Head of caudate nucleus (tissue), 42 donors: ENCODE measurements at regions of chr4 and their contacts with region 1.

Region 1: DNA sequence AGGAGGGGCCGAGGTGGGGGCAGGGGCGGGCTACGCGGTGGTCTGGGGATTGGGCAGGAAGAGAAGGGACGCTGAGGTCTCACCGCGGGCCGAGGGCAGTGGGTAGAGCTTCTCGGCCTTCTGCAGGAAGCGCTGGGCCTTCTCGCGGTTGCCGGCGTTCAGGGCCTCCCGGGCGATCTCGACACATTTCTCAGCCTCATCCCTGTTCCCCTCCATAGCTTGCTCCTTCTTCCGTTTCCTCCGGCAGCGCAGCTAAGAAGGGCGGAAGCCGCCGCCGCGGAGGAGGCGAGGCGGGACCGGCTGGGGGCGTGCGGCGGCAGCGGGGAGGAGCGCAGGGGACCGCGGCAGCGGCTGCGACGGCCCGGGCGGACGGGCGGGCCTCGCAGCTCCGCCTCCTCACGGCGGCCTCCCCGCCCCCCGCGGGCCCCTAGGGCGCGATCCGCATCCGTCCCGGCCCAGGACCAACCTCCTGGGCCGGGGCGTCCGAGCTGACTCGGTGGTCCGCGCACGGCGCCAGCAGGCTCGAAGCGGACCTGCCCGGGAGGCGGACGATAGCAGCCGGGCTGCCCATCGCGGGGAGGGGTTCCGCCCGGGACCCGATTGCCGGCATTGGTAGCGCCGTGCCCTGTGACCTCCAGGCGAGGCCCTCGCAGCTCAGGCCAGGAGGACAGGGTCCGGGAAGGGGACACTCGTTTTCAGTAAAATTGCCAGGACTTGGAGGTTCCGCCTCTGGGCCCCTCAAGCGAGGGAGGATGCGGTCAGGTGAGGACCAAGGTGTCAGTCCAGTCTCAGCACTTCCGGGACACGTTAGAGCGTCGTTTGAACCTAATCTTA is at the start of gene DNAJB14:
- DNase-seq: peak in 40 of 42 donors; percentile 43 to 90 (median 78)

Region 2: DNA sequence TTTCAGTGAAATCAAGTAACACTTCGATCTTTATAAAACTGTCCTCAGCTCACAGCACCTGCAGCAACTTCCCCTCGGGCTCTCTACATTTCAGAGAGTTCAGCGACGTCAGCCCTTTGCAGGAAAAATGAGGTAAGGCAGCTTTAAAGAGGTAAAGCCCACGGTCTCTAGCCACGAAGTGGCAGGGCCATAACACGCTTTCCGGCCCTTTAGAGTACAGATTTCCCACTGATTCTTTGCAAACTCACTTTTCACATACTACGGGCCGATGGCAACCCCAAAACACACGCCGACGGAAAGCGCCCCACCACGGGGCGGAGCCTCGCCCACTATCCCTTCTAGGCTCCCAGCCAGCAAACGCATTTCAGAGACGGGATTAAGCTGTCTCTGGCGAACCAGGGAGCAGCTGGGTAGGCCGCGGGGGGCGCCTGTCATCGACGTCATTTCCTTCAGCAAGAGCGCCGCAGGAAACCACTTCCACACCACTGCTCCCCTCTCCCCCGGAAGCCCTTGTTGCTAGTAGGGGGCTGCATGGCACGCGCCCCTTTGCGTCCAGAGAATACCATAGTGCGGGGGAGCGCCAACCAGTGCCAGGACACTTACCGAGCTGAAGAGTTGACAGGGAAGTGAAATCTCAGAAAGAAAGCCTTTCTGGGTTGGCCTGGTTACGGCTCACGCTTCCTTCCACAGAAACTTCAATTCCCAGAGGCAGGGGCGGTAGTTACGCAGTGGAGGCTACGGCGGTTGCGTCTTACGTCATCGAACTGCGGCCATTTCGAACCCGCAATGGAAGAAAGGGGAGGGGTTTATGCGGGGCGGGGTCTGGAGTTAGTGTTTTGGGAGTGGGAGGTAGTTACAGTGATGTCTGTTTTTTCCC is 383.0 kb before region 1 on chr4 and contains the start of gene TRMT10A:
- intact Hi-C with region 1: loop called (anchors 2 kb)
- DNase-seq: peak; percentile 95 to 99 (median 98)

Region 3: DNA sequence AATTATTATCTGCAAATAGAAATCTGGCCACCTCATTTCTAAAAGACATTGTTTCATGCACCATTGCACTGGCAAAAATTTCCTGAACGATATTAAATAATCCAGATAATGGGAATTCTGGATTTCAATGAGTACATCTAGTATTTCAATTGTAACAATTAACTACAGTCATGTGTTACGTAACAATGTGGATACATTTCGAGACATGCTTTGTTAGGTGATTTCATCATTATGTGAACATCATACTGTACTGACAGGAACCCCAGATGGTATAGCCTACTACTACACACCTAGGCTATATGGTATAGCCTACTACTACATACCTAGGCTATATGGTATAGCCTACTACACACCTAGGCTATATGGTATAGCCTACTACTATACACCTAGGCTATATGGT is 67.1 kb before region 1 on chr4:
- intact Hi-C with region 1: no loop called
- DNase-seq: no peak

Region 4: DNA sequence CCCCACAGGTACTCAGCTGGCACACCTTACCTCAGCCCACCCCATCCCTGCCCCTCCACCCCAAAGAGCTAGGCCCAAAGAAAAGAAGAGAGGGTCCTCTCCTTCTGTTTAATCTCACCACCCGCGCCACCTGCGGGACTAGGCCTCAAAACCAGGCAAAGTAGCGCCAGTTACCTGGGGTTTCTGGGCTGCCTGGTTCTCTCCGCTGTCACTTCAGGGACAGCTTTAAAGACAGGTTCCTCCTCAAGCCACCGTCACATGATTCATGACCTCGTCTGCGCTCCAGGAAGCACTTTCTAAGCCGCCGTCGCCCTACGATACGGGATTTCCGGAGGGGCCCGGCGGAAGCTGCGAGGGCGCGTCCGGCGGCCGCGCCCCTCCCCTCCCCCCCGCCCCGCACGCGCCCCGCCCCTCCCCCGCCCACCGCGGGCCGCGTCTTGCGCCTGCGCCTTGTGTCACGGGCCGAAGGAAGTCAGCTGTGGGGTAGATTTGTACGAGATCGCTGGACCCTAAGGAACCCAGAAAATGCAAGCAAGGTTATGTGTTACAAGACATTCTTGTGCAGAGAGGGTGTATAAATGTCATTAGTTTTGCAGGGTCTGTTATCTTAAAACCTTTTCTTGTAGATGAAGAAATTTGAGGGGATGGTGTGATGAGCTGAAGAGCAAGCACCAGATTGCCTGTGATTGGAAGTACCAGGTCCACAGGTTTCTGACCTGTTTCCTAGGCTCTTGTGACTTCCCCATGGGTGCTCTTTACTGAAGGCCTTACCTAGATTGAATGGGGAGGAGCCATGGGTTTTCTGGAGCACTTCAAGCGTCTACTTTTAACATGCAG is 52.2 kb before region 1 on chr4 and contains the start of gene LAMTOR3:
- intact Hi-C with region 1: loop called (anchors 2 kb)
- DNase-seq: peak; percentile 77 to 97 (median 92)